CD8-positive, alpha-beta T cell (primary cell): ENCODE measurements at regions of chrX and their contacts with region 1.

Region 1: DNA sequence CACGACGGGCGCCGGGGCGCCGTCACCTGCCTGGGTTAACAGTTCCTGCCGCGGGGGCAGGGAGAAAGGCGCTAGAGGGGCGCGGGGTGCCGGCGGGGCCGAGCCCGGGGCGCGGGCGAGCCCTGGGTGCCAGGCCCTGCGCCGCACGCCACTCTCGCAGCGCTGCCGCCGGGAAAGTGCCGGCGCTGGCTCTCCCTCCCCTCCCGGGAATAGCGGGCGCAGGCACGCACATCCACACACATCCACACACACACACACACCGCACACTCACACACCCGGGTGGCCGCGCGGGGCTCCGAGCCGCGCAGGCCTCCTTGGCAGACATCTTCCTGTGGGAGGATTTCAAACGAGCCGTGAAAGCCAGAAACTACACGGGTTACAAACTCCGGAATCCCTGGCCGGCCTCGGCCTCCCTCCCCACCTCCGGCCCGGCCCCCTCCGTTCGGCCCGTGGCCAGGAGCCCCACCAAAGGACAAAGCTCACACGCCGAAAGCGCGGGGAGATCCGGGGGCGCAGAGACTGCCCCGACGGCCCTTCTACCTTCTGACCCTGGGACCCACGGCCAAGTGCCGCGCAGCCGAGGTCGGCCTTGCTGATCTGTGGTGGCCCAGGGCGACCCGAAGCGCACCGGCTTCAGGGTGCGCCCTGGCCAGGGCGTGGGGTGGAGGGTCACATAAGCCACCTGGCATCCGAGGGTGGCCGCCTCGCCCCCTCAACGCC is 92.3 kb downstream of the BCOR start:
- DNase-seq: peak in 4 of 9 experiments; percentile 10 to 52 (median 16)
- ATAC-seq: peak; percentile 35
- H3K4me3 ChIP-seq: peak overlapping the region; percentile 24 to 37
- H3K4me3 Mint-ChIP-seq: peak overlapping the region; percentile 83
- H3K27ac ChIP-seq: no peak overlapping the region
- H3K27ac Mint-ChIP-seq: peak overlapping the region; percentile 45
- H3K4me1 ChIP-seq: peaks cover 19% of the 10 kb centered on the region
- H3K4me1 Mint-ChIP-seq: peaks cover 18% of the 10 kb centered on the region
- H3K27me3 ChIP-seq: peaks cover 3% of the 10 kb centered on the region in 2 experiments
- H3K27me3 Mint-ChIP-seq: peaks cover 13% of the 10 kb centered on the region
- CTCF ChIP-seq: no peak

Region 2: DNA sequence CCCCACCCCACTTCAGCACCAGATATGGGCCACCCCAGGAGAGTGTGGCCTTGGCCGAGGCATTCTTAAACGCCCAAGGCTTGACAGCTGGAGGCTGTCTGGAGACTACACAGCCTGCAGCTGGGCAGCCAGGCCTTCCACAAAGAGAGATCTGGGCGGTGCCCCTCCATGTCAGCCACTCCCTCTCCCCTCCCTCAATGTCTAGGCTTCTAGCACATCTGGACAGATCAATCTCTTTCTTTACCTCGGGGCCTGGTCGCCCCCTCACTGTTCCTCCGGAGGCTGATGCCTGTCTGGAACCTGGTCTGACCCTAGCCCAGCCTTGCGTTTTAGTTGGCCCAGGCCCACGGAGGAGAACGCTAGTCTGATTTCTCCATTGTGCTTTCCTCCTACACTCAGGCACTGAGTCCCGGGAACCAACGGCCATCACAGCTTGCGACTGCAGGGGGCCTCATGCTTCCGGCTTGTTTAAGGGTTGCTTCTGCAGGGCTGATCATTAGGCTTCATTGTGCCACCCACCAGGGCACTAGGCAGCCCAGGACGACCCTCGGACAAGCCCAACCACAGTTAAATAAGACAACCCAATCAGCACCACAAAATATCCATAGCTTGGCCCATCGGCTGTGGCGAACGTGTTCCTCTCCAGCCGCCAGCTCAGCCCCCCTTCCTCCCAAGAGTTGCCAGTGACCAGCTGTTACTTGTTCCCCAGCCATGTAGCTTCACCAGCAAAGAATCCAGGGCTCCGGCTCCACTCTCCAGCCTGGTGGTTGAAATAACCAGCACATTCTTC is 108.3 kb before region 1 on chrX:
- CTCF ChIA-PET with region 1: no interaction called
- POLR2A ChIA-PET with region 1: no interaction called
- intact Hi-C with region 1: no loop called
- DNase-seq: no peak
- ATAC-seq: no peak
- H3K4me3 ChIP-seq: no peak overlapping the region
- H3K4me3 Mint-ChIP-seq: no peak overlapping the region
- H3K27ac ChIP-seq: no peak overlapping the region
- H3K27ac Mint-ChIP-seq: no peak overlapping the region
- H3K4me1 ChIP-seq: peaks cover under 1% of the 10 kb centered on the region
- H3K4me1 Mint-ChIP-seq: no peaks in the 10 kb centered on the region
- H3K27me3 ChIP-seq: no peaks in the 10 kb centered on the region
- H3K27me3 Mint-ChIP-seq: no peaks in the 10 kb centered on the region
- CTCF ChIP-seq: no peak

Region 3: DNA sequence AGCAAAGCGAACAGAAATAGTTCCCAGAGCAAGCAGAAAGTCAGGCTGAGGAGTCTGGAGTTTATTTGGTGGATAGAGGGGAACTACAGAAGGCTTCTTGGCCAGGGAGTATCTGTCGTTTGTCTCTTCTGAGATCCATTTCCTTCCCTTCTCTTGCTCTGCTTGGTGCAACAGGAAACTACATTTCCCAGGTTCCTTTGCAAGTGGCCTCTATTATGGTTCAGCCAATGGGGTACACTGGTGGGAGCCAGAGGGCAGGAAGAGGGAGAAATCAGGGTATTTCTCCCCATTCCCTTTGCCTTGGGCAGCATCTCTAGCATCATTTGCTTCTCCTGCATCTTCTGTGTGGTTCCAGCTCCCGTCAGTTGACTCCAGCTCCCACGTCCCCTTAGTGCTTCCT is 49.8 kb before region 1 on chrX:
- CTCF ChIA-PET with region 1: no interaction called
- POLR2A ChIA-PET with region 1: no interaction called
- intact Hi-C with region 1: no loop called
- DNase-seq: peak in 1 of 9 experiments; percentile 26
- ATAC-seq: peak; percentile 34
- H3K4me3 ChIP-seq: no peak overlapping the region
- H3K4me3 Mint-ChIP-seq: no peak overlapping the region
- H3K27ac ChIP-seq: no peak overlapping the region
- H3K27ac Mint-ChIP-seq: no peak overlapping the region
- H3K4me1 ChIP-seq: peaks cover 5% of the 10 kb centered on the region
- H3K4me1 Mint-ChIP-seq: peaks cover 8% of the 10 kb centered on the region
- H3K27me3 ChIP-seq: no peaks in the 10 kb centered on the region
- H3K27me3 Mint-ChIP-seq: no peaks in the 10 kb centered on the region
- CTCF ChIP-seq: no peak

Region 4: DNA sequence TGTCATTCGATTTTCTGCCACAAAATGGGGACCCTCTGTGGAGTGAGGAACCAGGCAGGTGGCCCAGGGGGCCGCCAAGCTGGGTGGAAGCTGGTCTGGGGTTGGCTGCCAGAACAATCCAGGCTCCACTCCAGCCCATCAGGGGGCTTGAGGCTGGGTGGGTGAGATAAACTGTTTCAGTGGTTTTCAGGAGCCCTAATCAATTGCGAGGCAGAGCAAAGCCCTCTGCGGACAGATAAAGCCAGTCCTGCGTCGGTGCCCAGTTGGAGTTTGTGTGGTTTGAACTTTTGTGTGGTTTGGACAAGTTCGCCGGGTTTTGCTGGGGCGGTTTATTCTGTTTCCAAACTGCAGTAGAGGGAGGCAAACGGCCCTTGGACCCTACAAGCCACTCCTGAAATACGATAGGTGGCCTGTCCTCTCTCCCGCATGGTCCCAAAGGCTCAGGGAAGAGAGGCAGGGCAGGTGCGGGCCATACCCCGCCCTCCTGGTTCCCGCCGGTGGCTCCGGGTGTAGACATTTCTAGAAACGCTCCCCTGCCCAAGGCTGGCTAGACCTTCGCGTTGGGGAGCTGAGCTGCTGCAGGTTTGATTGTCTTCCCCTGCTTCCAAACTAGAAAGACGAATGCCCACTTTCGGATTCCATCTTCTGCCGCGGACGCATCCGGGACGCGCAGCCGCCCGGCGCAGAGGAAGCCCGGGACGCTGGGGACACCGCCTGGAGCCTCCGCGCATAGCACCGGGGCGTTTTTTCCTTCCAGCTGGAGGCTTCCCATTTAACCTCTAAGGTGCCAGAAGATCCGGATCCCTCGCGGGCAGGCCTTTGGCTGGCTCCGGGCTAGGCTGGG is 261.3 kb after region 1 on chrX:
- CTCF ChIA-PET with region 1: no interaction called
- POLR2A ChIA-PET with region 1: no interaction called
- intact Hi-C with region 1: loop called in 1 of 2 experiments (anchors 1 kb)
- DNase-seq: peak; percentile 10 to 72 (median 46)
- ATAC-seq: peak; percentile 89
- H3K4me3 ChIP-seq: peak overlapping the region; percentile 57 to 65
- H3K4me3 Mint-ChIP-seq: peak overlapping the region; percentile 79
- H3K27ac ChIP-seq: no peak overlapping the region
- H3K27ac Mint-ChIP-seq: no peak overlapping the region
- H3K4me1 ChIP-seq: peaks cover 11% of the 10 kb centered on the region
- H3K4me1 Mint-ChIP-seq: peaks cover 6% of the 10 kb centered on the region
- H3K27me3 ChIP-seq: no peaks in the 10 kb centered on the region
- H3K27me3 Mint-ChIP-seq: no peaks in the 10 kb centered on the region
- CTCF ChIP-seq: peak; percentile 41

Region 5: GRCh38 chrX:40552768-40553167 is 547.3 kb after region 1 on chrX:
- CTCF ChIA-PET with region 1: no interaction called
- POLR2A ChIA-PET with region 1: no interaction called
- intact Hi-C with region 1: no loop called
- DNase-seq: no peak
- ATAC-seq: no peak
- H3K4me3 ChIP-seq: no peak overlapping the region
- H3K4me3 Mint-ChIP-seq: no peak overlapping the region
- H3K27ac ChIP-seq: no peak overlapping the region
- H3K27ac Mint-ChIP-seq: no peak overlapping the region
- H3K4me1 ChIP-seq: no peaks in the 10 kb centered on the region
- H3K4me1 Mint-ChIP-seq: no peaks in the 10 kb centered on the region
- H3K27me3 ChIP-seq: no peaks in the 10 kb centered on the region
- H3K27me3 Mint-ChIP-seq: no peaks in the 10 kb centered on the region
- CTCF ChIP-seq: no peak